Activated CD8-positive, alpha-beta T cell treated with anti-CD3 and anti-CD28 coated beads for 36 hours (primary cell): ENCODE measurements at regions of chr17 and their contacts with region 1.

Region 1: DNA sequence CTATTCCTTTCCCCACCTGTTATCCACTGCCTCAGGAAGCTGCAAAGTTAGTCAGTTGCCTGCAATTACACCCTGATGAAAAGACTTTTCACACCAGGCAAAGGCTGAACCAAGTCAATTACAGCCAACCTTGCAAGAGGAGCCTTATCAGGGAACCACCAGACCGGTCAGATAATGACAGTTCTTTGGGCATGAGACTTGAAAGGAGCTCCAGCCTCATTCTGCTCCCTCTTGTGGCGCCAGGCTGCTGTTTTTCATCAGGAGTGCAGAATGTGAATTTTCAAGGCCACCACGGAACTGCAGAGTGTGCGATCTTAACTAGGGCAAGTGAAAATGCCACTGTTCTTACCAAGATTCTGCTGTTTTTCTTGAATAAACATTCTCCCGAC is 22.5 kb downstream of the DNAI2 start:
- DNase-seq: peak; percentile 50
- ATAC-seq: no peak
- H3K4me3 Mint-ChIP-seq: no peak overlapping the region
- H3K27ac Mint-ChIP-seq: no peak overlapping the region
- H3K4me1 Mint-ChIP-seq: peaks cover 10% of the 10 kb centered on the region
- H3K27me3 Mint-ChIP-seq: peaks cover 5% of the 10 kb centered on the region
- CTCF ChIP-seq: no peak

Region 2: DNA sequence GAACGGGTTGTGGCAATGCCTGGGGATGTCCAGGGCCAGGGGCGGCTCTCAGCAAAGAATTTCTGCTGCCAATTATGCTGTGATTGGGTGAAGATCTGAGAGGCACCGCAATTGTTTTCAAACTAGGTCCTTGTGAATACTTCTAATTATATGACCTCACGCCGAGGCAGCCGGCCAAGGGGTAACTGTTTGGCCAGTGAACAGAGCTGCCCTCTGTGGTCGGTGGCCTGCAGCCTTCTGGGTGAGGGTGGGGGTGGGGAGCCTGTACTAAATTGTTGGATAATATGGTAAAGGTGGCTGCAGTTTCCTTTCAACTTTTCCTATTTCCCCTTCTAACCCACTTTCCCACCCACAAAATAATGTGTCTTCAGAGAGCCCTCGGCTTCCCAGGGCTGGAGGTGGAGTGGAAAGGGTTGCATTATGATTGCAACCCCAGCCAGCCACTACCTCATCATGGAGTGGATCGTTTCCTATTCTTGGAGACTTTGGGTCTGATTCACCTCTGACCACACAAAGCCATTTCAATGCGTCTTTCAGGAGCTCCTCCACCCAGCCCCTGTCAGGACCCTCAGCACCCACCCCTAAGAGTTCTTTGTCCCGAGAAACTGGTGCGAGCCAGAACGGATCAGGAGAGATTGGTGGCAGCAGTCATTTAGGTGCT is 24.5 kb before region 1 on chr17:
- CTCF ChIA-PET with region 1: no interaction called
- POLR2A ChIA-PET with region 1: no interaction called
- intact Hi-C with region 1: no loop called
- DNase-seq: no peak
- ATAC-seq: no peak
- H3K4me3 Mint-ChIP-seq: no peak overlapping the region
- H3K27ac Mint-ChIP-seq: no peak overlapping the region
- H3K4me1 Mint-ChIP-seq: peaks cover 13% of the 10 kb centered on the region
- H3K27me3 Mint-ChIP-seq: peaks cover 8% of the 10 kb centered on the region
- CTCF ChIP-seq: no peak

Region 3: GRCh38 chr17:74316220-74316619 is 19.7 kb after region 1 on chr17:
- CTCF ChIA-PET with region 1: interaction called, 10 read pairs
- POLR2A ChIA-PET with region 1: no interaction called
- intact Hi-C with region 1: no loop called
- DNase-seq: no peak
- ATAC-seq: no peak
- H3K4me3 Mint-ChIP-seq: no peak overlapping the region
- H3K27ac Mint-ChIP-seq: no peak overlapping the region
- H3K4me1 Mint-ChIP-seq: no peaks in the 10 kb centered on the region
- H3K27me3 Mint-ChIP-seq: no peaks in the 10 kb centered on the region
- CTCF ChIP-seq: no peak

Region 4: DNA sequence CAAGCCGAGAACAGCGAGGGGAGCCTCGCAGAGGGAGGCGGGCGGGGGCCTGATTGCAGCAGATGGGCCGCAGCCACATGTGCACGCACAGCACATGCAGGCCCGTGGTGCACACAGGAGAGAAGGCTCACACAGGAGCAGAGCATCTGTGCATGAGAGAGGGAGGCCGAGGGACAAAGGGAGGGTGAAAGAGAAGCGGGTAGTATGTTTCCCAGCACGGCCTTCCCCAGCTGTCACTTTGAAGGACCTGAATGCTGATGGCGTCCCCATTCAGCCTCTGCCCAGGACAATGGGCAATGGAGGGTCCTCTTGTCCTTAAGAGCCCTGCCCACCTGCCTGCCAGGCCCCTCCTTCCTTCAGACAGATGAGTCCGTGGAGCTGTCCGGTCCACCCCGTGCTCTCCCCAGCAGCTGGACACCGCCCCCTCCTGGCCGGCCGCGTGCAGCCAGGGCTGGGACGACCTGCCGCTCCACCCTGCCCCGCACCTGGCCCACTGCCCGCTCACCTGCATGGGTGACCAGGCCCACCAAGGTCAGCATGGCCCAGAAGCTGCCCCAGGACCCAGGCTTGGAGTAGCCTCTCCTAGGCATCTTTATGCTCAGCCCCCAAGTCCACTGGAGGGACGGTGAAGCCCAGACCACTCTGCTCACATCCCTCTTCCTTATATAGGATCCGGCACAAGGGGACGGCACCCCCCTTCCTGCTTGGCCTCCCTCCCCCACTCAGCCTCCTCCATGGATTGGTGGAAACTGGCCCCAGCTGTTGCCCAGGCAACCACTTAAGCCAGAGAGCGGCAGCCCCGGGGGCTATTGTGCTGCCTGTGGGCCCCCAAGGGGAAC is 64.9 kb after region 1 on chr17 and contains the start of gene BTBD17:
- CTCF ChIA-PET with region 1: interaction called, 55 read pairs
- POLR2A ChIA-PET with region 1: interaction called, 4 read pairs
- intact Hi-C with region 1: no loop called
- DNase-seq: peak; percentile 54
- ATAC-seq: peak; percentile 73
- H3K4me3 Mint-ChIP-seq: no peak within 1 kb of the TSS
- H3K27ac Mint-ChIP-seq: no peak within 1 kb of the TSS
- H3K4me1 Mint-ChIP-seq: no peaks in the 10 kb centered on the region
- H3K27me3 Mint-ChIP-seq: peaks cover 23% of the 10 kb centered on the region
- CTCF ChIP-seq: peak; percentile 55
- total RNA-seq, gene BTBD17: not detected